ENCODE measurements at regions of chr1 and their contacts with region 1.

Region 1: GRCh38 chr1:65958561-65959350 is 166.1 kb downstream of the PDE4B start:
- DNase-seq: peak; percentile 13
- H3K4me3 Mint-ChIP-seq: no peak overlapping the region
- H3K27ac Mint-ChIP-seq: no peak overlapping the region
- H3K4me1 Mint-ChIP-seq: no peaks in the 10 kb centered on the region
- H3K27me3 Mint-ChIP-seq: peaks cover 2% of the 10 kb centered on the region

Region 2: DNA sequence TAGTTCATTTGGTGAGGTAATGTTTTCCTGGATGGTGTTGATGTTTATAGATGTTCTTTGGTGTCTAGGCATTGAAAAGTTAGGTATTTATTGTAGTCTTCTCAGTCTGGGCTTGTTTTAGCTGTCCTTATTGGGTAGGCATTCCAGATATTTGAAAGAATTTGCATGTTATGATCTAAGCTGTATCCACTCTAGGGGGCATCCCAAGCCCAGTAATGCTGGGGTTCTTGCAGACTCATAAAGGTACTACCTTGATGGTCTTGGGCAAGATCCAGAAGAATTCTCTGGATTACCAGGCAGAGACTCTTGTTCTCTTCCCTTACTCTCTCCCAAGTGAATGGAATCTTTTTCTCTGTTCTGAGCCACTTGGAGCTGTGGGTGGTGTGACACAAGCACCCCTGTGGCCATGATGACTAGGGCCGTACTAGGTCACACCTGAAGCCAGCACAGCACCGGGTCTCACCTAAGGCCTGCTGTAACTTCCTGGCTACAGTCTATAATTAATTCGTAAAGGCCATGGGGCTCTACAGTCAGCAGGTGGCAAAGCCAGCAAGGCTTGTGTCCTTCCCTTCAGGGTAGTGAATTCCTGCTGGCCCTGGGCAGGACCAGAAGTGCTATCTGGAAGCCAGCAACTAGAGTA is 240.8 kb before region 1 on chr1:
- CTCF ChIA-PET with region 1: no interaction called
- POLR2A ChIA-PET with region 1: no interaction called
- intact Hi-C with region 1: loop called (anchors 5 kb)
- DNase-seq: peak; percentile 15
- H3K4me3 Mint-ChIP-seq: no peak overlapping the region
- H3K27ac Mint-ChIP-seq: no peak overlapping the region
- H3K4me1 Mint-ChIP-seq: no peaks in the 10 kb centered on the region
- H3K27me3 Mint-ChIP-seq: peaks cover 6% of the 10 kb centered on the region

Region 3: DNA sequence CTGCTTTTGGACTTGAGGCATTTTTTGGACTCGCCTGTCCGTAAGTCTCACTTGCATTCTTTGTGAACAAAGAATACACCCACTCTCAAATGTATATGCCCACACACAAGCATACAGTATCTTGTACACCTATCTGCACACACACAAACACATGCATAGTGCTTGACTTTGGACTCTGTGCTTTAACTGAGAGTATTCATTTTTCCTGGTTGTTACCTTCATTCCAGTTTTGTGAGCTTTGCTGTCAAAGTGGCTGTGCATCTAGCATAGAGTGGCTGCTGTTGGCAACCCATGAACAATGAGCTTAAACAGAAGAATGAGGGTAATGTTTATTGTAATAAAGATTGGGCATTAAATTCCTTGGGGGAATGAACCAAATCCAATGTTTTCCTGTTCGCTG is 32.9 kb after region 1 on chr1:
- CTCF ChIA-PET with region 1: no interaction called
- POLR2A ChIA-PET with region 1: no interaction called
- intact Hi-C with region 1: no loop called
- DNase-seq: no peak
- H3K4me3 Mint-ChIP-seq: no peak overlapping the region
- H3K27ac Mint-ChIP-seq: no peak overlapping the region
- H3K4me1 Mint-ChIP-seq: no peaks in the 10 kb centered on the region
- H3K27me3 Mint-ChIP-seq: peaks cover under 1% of the 10 kb centered on the region

Measured in activated CD4-positive, alpha-beta memory T cell treated with anti-CD3 and anti-CD28 coated beads for 36 hours (primary cell).